GM13977 (cell line): ENCODE measurements at regions of chr17 and their contacts with region 1.

Region 1: DNA sequence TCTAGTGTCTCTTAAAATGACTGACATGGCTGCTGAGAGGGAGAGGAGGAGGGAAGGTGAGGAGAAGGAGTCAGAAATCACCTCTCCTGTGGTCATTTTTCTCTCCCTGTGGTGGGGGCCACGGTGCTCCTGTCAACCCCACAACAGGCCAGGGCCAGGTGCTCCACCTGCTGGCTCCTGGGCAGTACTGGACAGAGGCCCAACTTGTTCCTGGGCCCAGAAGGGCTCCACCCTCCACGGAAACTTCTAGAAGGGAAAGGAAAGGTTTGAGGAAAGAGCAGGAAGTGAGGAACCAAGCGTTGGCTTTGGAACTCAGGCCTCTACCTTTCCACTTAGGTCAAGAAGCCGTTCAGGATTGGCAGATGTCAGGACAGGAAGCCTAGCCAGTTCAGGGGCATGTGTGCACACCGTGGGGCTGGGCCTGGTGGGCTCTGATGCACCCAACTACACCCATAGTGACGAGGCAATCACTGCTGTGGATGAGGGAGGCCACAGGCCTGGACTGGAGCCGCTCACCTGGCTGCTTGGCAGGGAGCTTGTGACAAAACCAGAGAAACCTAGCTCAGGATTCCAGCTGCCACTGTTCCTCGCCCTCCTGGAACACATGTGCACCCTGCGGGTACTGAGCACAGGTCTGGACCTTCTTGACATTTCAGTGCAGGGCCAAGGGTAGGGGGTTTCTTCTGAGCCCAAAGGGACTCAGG is 36.1 kb downstream of the WNT3 start:
- DNase-seq: peak; percentile 63
- CTCF ChIP-seq: peak; percentile 75

Region 2: DNA sequence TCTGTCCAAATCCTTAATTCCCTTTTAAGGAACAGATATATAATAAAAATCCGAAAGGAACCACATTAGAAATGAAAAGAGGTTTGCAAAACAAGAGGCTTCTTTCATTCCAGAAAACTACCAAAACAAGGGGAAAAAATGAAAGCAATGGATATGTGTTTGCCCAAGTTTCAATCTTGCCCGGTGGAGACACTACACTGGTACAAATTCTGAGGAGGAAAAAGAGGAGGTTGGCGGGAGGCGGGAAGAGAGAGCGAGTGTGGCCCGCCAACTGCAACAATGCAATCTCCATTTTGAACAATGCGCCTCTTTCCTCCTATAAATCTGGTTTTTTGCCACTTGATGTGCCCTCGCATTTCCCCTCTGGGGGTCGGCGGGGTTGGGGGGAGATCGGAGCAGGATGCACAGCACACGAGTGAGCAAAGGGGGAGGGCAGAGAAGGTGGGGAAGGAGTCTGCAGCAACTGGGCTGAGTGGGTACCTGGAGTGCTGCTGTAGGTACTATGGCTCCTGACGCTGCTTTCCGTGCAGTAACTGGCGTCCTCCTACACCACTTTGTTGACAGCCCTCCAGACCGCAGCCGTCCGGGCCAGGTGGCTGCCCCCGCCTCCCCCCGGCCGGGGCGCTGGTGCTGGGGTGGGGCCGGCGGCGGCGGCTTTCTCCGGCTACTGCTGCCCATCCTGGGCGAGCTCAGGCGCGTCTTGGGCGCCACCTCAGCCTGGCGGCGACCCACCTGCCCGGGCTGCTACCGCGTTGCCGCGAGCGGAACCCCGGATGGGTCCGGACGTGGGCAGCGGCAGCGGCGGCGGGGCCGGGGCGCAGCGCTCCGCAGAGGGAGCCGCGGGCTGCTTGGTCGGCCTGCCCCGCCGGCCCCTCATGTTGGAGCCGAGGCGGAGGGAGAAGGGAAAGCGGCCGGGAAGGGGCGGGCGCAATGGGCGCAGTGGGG is 1198.0 kb before region 1 on chr17:
- in situ Hi-C with region 1: loop called (anchors 25 kb)
- DNase-seq: peak; percentile 88
- CTCF ChIP-seq: no peak

Region 3: DNA sequence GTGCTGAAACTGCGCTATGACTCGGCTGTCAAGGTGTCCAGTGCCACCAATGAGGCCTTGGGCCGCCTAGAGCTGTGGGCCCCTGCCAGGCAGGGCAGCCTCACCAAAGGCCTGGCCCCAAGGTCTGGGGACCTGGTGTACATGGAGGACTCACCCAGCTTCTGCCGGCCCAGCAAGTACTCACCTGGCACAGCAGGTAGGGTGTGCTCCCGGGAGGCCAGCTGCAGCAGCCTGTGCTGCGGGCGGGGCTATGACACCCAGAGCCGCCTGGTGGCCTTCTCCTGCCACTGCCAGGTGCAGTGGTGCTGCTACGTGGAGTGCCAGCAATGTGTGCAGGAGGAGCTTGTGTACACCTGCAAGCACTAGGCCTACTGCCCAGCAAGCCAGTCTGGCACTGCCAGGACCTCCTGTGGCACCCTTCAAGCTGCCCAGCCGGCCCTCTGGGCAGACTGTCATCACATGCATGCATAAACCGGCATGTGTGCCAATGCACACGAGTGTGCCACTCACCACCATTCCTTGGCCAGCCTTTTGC is 94.0 kb after region 1 on chr17:
- in situ Hi-C with region 1: loop called (anchors 25 kb)
- DNase-seq: no peak
- CTCF ChIP-seq: peak; percentile 36

Region 4: GRCh38 chr17:46916211-46916610 is 133.8 kb after region 1 on chr17:
- in situ Hi-C with region 1: no loop called
- DNase-seq: no peak
- CTCF ChIP-seq: no peak